Activated CD8-positive, alpha-beta memory T cell treated with anti-CD3 and anti-CD28 coated beads, Interleukin-2, amount 10 ng/mL, durations not matched to agents 7 days and 5 days (primary cell): ENCODE measurements at regions of chr17 and their contacts with region 1.

Region 1: GRCh38 chr17:38351412-38352222 is at the start of gene SOCS7:
- DNase-seq: peak; percentile 93
- ATAC-seq: peak; percentile 92
- H3K4me3 Mint-ChIP-seq: peak within 1 kb of the TSS; percentile 83
- H3K27ac Mint-ChIP-seq: peak within 1 kb of the TSS; percentile 95
- H3K4me1 Mint-ChIP-seq: peaks cover 38% of the 10 kb centered on the region
- H3K27me3 Mint-ChIP-seq: no peaks in the 10 kb centered on the region
- total RNA-seq, gene SOCS7: 16.2 to 16.8 TPM

Region 2: DNA sequence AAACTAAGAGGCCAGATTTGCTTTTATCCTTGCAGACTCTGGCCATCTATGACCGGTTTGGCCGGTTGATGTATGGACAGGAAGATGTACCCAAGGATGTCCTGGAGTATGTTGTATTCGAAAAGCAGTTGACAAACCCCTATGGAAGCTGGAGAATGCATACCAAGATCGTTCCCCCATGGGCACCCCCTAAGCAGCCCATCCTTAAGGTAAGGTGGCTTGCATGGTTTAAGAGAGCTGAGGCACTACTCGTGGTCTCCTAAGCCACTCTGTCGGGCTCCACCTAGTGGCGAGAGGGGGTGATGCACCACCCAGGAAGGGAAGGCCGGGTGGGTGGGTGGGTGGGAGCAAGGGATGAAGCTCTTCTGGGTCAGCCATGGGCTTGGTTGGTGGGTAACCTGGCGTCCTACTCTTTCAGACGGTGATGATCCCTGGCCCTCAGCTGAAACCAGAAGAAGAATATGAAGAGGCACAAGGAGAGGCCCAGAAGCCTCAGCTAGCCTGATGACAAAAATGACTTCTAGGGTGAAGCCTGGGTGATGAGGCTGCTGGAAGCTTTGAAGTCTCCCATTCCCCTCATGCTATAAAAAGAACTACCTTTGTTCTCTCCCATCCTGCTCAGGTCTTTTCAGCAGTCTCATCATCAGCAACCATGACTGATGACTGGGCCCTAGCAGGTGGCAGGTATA is 29.4 kb before region 1 on chr17:
- CTCF ChIA-PET with region 1: interaction called, 13 read pairs
- DNase-seq: peak; percentile 78
- ATAC-seq: peak; percentile 93
- H3K4me3 Mint-ChIP-seq: no peak overlapping the region
- H3K27ac Mint-ChIP-seq: no peak overlapping the region
- H3K4me1 Mint-ChIP-seq: peaks cover 7% of the 10 kb centered on the region
- H3K27me3 Mint-ChIP-seq: no peaks in the 10 kb centered on the region

Region 3: GRCh38 chr17:38333635-38334295 is 17.9 kb before region 1 on chr17:
- CTCF ChIA-PET with region 1: interaction called, 18 read pairs
- DNase-seq: peak; percentile 66
- ATAC-seq: peak; percentile 70
- H3K4me3 Mint-ChIP-seq: no peak overlapping the region
- H3K27ac Mint-ChIP-seq: no peak overlapping the region
- H3K4me1 Mint-ChIP-seq: no peaks in the 10 kb centered on the region
- H3K27me3 Mint-ChIP-seq: no peaks in the 10 kb centered on the region

Region 4: DNA sequence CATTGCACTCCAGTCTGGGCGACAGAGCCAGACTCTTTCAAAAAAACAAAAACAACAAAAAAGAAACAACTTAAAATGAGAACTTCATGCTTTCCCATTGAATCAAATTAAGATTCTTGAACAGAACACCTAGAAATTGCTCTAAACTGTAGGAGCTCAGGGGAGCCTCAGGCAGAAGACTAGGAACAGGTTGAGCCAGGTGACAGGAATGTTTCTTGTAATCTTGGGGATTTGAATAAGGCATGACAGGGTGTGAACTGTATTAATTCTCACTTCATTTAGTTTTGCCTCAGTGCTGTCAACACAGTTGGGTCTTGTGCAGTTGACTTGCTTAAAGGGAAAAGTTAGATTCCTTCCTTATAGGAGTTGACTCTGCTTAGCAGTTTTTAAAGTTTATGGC is 27.8 kb after region 1 on chr17:
- CTCF ChIA-PET with region 1: interaction called, 13 read pairs
- DNase-seq: no peak
- ATAC-seq: no peak
- H3K4me3 Mint-ChIP-seq: no peak overlapping the region
- H3K27ac Mint-ChIP-seq: no peak overlapping the region
- H3K4me1 Mint-ChIP-seq: no peaks in the 10 kb centered on the region
- H3K27me3 Mint-ChIP-seq: no peaks in the 10 kb centered on the region

Region 5: GRCh38 chr17:38415250-38416194 is 63.9 kb after region 1 on chr17:
- CTCF ChIA-PET with region 1: interaction called, 334 read pairs
- DNase-seq: no peak
- ATAC-seq: peak; percentile 34
- H3K4me3 Mint-ChIP-seq: no peak overlapping the region
- H3K27ac Mint-ChIP-seq: peak overlapping the region; percentile 71
- H3K4me1 Mint-ChIP-seq: peaks cover 5% of the 10 kb centered on the region
- H3K27me3 Mint-ChIP-seq: peaks cover 39% of the 10 kb centered on the region

Region 6: GRCh38 chr17:38421171-38421841 is 69.7 kb after region 1 on chr17:
- CTCF ChIA-PET with region 1: interaction called, 334 read pairs
- DNase-seq: no peak
- ATAC-seq: no peak
- H3K4me3 Mint-ChIP-seq: no peak overlapping the region
- H3K27ac Mint-ChIP-seq: no peak overlapping the region
- H3K4me1 Mint-ChIP-seq: no peaks in the 10 kb centered on the region
- H3K27me3 Mint-ChIP-seq: peaks cover 74% of the 10 kb centered on the region